Transverse colon (tissue), 4 donors: ENCODE measurements at regions of chr1 and their contacts with region 1.

Region 1: DNA sequence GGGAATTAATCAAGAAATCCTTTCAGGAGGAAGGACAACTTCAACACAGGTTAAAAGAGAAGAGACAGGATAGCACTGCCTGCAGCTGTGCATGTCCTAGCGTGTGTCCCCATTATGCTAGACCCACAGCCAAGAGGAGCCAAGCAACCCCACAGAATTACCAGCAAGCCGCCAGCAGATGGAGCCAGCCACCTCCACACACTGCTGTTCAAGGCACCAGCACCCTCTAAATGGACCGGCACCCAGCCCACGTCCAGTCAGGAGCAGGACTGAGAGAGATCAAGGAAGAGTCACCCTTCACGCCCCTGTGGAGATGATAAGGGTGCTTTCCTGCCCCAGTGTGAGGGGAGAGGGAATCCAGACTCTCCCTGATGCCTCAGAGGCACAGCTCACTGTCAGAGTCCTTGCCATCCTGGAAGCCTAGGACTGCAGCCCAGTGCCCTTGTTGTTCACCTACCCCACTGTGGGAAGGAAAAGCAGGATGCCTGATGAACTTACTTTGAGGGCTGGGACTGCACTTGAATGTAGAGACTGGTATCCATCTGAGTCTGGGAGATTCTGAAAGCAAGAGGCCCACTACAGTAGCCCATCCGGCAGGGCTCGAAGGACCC is 37.1 kb upstream of the CTTNBP2NL start:
- DNase-seq: peak; percentile 81
- H3K4me3 ChIP-seq: peak overlapping the region in 1 of 4 donors; percentile 29
- H3K27ac ChIP-seq: peak overlapping the region; percentile 78 to 91 (median 86)
- H3K4me1 ChIP-seq: peaks cover 17 to 32% (median 29%) of the 10 kb centered on the region in 4 donors
- H3K27me3 ChIP-seq: no peaks in the 10 kb centered on the region
- CTCF ChIP-seq: peak; percentile 68 to 78 (median 72)
- EP300 ChIP-seq: no peak
- POLR2A ChIP-seq: no peak

Region 2: DNA sequence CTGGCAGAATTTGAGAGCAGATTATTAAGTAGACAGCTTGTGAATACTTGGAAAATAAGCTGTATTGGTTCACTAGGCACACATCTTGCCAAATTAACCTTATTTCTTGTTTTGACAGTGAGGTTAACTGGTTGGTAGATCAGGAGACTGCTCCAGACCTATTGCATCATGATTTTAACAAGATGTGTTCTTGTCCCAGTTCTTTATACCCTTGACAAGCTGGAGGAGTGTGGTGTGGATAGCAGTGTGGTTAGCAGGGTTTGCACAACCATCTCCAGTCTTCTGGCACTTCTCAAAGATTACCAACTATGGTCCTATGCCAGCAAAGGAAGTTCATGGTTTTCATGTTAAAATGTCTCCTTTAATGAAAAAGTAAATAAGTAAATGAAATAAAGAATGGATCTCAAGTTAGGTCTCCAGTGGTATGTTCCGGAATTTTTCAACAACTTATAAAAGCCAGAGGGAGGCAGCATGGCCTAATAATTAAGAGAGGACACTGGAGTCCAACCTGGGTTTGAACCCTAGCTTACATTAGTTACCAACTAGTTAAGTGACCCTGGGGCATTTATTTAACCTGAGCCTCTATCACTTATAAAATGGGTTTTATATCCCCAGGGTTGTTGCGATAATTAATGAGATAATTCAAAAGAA is 569.1 kb before region 1 on chr1:
- in situ Hi-C with region 1: no loop called
- intact Hi-C with region 1: loop called (anchors 10 kb)
- DNase-seq: no peak
- H3K4me3 ChIP-seq: no peak overlapping the region
- H3K27ac ChIP-seq: peak overlapping the region in 1 of 4 donors; percentile 24
- H3K4me1 ChIP-seq: no peaks in the 10 kb centered on the region
- H3K27me3 ChIP-seq: peaks cover 6% of the 10 kb centered on the region
- CTCF ChIP-seq: peak in 1 of 5 experiments; percentile 18
- EP300 ChIP-seq: no peak
- POLR2A ChIP-seq: no peak

Region 3: GRCh38 chr1:111833334-111833733 is 525.6 kb before region 1 on chr1:
- in situ Hi-C with region 1: no loop called
- intact Hi-C with region 1: no loop called
- DNase-seq: no peak
- H3K4me3 ChIP-seq: no peak overlapping the region
- H3K27ac ChIP-seq: no peak overlapping the region
- H3K4me1 ChIP-seq: no peaks in the 10 kb centered on the region
- H3K27me3 ChIP-seq: no peaks in the 10 kb centered on the region
- CTCF ChIP-seq: no peak
- EP300 ChIP-seq: no peak
- POLR2A ChIP-seq: no peak

Region 4: DNA sequence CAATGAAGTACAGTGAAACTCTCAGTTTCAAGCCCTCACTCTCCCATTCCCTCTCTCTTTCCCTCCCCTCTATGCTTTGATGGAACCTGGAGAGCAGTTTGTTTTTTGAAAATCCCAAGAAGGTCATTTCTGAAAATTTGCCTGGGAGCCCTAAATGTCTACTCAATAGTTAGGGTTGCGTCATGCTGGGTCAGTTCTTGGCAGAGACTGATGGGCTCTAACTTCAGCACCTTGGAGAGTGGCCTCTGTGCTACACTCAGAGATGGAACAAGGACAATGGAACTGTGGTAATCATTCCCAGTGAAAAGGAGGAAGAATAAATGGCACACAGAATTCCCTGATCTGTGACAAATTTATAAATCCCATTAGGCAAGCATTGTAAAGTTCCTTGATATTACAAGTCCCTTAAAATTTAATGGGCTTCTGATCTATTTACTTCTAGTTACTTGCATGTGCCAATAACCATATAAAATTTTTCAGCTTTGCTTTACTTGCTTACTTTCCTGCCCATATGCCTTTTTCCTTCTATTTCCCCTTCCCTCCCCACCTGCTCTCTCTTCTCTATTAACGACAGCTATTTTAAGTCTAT is 186.5 kb before region 1 on chr1:
- in situ Hi-C with region 1: no loop called
- intact Hi-C with region 1: no loop called
- DNase-seq: no peak
- H3K4me3 ChIP-seq: no peak overlapping the region
- H3K27ac ChIP-seq: no peak overlapping the region
- H3K4me1 ChIP-seq: no peaks in the 10 kb centered on the region
- H3K27me3 ChIP-seq: no peaks in the 10 kb centered on the region
- CTCF ChIP-seq: no peak
- EP300 ChIP-seq: no peak
- POLR2A ChIP-seq: no peak